Activated CD8-positive, alpha-beta T cell treated with anti-CD3 and anti-CD28 coated beads for 36 hours (primary cell): ENCODE measurements at regions of chrX and their contacts with region 1.

Region 1: DNA sequence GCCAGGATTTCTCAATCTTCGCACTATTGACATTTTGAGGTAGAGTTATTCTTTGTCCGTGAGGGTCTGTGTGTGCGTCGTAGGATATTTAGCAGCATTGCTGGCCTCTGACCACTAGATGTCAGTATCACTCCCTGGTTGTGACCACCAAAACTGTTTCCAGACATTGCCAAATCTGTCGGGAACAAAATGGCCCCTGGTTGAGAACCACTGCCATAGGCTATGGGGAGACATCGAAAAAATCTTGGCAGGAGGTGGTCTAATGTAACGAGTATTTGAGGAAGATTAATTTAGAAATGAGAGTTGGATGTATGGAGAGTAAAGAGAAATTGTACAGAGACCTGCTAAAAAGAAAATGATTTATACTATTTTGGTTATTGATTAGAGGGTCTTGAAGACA is 108.4 kb downstream of the DOCK11 start:
- DNase-seq: peak; percentile 52
- ATAC-seq: peak; percentile 74
- H3K4me3 Mint-ChIP-seq: no peak overlapping the region
- H3K27ac Mint-ChIP-seq: peak overlapping the region; percentile 47
- H3K4me1 Mint-ChIP-seq: peaks cover 13% of the 10 kb centered on the region
- H3K27me3 Mint-ChIP-seq: no peaks in the 10 kb centered on the region
- CTCF ChIP-seq: peak; percentile 70

Region 2: GRCh38 chrX:118459494-118459893 is 144.5 kb before region 1 on chrX:
- CTCF ChIA-PET with region 1: interaction called, 46 read pairs
- POLR2A ChIA-PET with region 1: no interaction called
- intact Hi-C with region 1: loop called (anchors 2 kb)
- DNase-seq: peak; percentile 9
- ATAC-seq: peak; percentile 73
- H3K4me3 Mint-ChIP-seq: no peak overlapping the region
- H3K27ac Mint-ChIP-seq: no peak overlapping the region
- H3K4me1 Mint-ChIP-seq: no peaks in the 10 kb centered on the region
- H3K27me3 Mint-ChIP-seq: no peaks in the 10 kb centered on the region
- CTCF ChIP-seq: peak; percentile 46

Region 3: DNA sequence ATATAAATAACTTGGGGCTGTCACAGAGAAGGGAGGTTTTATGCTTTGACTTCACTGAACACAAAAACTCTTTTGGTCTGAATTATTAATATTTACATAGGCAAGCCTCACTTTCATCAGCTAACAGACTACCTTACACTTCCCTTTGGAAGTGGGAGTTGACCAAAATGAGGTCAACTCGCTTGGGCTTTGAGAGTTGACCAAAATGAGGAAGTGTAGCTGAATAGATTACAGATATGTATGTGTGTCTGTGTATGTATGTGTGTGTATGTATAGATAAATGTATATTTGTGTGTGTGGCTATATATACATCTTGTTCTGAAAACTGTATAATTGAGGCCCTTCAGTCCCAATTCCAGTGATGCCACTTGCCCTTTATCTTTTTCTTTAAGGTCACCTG is 10.2 kb after region 1 on chrX:
- CTCF ChIA-PET with region 1: interaction called, 24 read pairs
- POLR2A ChIA-PET with region 1: no interaction called
- intact Hi-C with region 1: no loop called
- DNase-seq: no peak
- ATAC-seq: no peak
- H3K4me3 Mint-ChIP-seq: no peak overlapping the region
- H3K27ac Mint-ChIP-seq: no peak overlapping the region
- H3K4me1 Mint-ChIP-seq: no peaks in the 10 kb centered on the region
- H3K27me3 Mint-ChIP-seq: no peaks in the 10 kb centered on the region
- CTCF ChIP-seq: no peak